AG04449 (cell line): ENCODE measurements at regions of chr17 and their contacts with region 1.

Region 1: GRCh38 chr17:48068491-48068961 is 20.4 kb downstream of the NFE2L1 start:
- DNase-seq: peak; percentile 31
- H3K4me3 ChIP-seq: no peak overlapping the region
- CTCF ChIP-seq: peak; percentile 39

Region 2: DNA sequence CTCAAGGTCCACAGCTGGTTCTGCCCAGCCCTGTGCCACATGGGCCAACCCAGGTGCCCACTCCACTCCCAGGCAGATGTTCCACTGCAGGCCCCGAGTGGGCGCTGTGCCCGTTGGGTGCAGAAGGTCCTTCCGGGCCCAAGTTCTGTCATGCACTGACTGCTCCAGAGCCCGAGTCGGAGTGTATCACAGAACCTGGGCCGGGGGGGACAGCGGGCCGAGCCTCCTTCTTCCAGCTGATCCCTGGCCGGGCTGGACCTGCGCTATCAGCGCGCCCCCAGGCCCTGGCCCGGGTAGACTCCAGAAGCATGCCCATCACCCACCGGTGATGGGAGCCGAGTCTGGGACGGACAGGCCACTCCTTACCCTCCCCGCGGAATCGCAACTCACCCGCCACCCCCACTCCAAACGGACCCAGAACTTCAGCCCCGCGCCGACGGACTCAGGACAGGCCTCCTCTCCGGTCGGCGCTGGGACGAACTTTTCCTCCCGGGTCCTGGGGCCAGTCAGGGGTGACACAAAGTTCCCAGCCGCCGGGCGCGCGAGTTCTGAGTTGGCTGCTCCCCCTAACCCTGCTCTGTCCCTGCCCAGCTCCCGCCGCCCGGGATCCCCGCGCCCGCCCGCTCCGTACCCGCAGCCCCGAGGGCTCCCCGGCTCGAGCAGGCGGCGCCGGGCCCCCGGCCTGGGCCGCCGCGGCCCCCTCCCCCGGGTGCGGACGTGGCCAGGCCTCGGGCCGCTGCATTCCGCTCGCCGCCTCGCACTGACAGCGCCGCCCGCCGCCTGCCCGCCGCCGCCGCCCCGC is 31.3 kb before region 1 on chr17 and contains the start of gene COPZ2:
- CTCF ChIA-PET with region 1: interaction called, 305 read pairs
- POLR2A ChIA-PET with region 1: no interaction called
- DNase-seq: no peak
- H3K4me3 ChIP-seq: peak within 1 kb of the TSS; percentile 76
- CTCF ChIP-seq: peak; percentile 81

Region 3: GRCh38 chr17:48047741-48048383 is 20.7 kb before region 1 on chr17 and contains the start of gene NFE2L1:
- CTCF ChIA-PET with region 1: interaction called, 41 read pairs
- POLR2A ChIA-PET with region 1: interaction called, 11 read pairs
- DNase-seq: peak; percentile 98
- H3K4me3 ChIP-seq: peak within 1 kb of the TSS; percentile 93
- CTCF ChIP-seq: no peak

Region 4: DNA sequence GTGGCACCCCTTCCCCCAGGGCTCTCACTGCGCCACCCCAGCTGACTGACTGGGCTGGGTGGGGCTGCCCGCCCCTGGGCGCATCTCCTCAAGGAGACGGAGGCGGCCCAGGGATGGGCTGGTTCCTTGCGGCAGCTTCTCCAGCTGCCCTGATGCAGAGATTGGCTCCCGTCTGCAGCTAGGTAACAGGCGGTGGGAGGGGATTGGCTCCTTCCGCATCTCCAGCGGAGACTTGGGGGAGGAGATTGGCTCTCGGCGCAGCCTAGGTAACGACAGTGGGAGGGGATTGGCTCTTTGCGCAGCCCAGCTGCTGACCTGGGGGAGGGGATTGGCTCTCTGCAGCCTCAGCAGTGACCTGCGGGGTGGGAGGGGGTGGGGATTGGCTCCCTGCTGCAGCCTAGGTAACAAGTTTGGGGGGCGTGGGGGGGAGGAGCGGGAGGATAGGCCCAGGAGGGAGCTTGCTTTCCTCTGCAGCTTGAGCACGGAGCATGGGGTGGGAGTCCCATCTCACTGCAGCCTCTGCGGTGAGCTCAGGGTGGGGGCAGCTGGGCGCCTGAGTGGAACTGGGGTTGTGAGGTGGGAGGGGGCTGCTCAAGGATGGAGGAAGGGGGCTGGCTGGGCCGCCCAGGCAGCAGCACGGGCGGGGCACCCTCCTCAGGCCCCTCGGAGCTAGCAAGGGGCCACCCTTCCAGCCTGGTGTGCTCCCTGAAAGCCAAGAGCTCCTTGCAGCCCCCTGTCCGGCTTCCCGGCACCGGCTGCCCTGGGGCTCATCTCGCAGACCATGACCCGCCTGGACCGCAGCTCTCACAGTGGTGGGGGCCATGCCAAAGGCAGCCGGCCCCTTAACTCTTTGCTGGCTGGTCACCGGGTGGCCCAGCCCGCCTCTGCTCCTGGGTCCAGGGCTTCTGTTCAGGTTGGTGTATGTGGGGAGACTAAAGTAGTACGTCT is 14.0 kb before region 1 on chr17:
- CTCF ChIA-PET with region 1: interaction called, 41 read pairs
- POLR2A ChIA-PET with region 1: interaction called, 11 read pairs
- DNase-seq: no peak
- H3K4me3 ChIP-seq: peak overlapping the region; percentile 15
- CTCF ChIP-seq: no peak

Region 5: GRCh38 chr17:48084932-48085444 is 16.5 kb after region 1 on chr17:
- CTCF ChIA-PET with region 1: interaction called, 28 read pairs
- POLR2A ChIA-PET with region 1: no interaction called
- DNase-seq: no peak
- H3K4me3 ChIP-seq: no peak overlapping the region
- CTCF ChIP-seq: no peak